HepG2 (cell line): ENCODE measurements at regions of chr7 and their contacts with region 1.

Region 1: DNA sequence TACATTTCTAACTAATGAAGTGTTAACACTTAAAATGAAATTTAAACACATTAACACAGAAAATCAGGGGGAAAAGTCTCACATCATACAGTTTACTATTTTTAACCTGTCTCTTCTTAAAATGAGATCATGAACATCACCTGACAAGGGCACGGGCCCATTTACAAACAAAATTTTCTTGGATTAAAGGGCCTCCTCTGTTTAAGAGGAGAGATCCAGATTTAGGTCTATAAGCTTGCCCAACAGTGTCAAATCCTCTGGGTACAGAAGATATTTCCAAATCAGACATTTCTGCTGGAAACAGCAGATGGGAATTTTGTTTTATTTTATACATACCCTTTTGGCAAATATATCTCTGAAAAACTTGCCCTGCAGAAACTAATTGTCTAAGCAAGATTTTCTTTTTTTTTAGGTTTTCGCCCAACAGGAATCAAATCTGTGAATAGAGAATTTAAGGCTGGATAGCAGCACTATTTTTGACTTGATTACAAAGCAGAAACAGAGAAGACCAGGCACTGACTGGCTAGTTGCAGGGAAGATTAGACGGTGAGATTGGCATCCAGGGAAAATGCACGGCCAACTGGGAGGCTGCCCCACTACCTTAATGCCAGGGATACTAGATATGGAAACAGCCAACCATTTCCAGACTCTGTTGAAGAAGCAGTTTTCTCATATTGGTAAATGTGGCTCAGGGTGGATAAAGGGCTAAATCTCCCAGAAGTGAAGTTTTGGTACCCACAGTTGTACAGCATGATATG is 173.4 kb downstream of the LRRN3 start:
- DNase-seq: no peak
- ATAC-seq: no peak
- H3K4me3 ChIP-seq: no peak overlapping the region
- H3K27ac ChIP-seq: no peak overlapping the region
- H3K4me1 ChIP-seq: peaks cover 28% of the 10 kb centered on the region
- H3K27me3 ChIP-seq: no peaks in the 10 kb centered on the region
- CTCF ChIP-seq: no peak
- EP300 ChIP-seq: no peak
- POLR2A ChIP-seq: no peak
- RAD21 ChIP-seq: no peak

Region 2: DNA sequence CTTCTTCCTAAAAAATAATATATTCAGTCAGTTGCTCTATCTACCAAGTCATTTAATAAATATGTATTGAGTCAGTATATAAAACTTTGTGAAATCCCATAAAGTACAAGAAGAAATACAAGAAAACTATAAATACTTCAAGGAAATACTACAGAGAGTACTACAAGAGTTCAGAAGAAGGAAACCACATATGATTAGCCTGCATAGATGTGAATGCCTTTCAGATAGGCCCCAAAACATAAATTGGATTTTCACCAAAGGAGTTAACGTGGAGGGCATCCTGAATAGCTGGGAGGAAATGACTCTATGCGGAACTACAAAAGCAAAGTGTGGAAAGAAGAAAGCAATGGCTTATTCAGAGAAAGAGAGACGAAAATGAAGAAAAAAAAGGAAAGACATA is 53.3 kb before region 1 on chr7:
- CTCF ChIA-PET with region 1: no interaction called
- POLR2A ChIA-PET with region 1: no interaction called
- in situ Hi-C with region 1: no loop called
- intact Hi-C with region 1: no loop called
- DNase-seq: no peak
- ATAC-seq: no peak
- H3K4me3 ChIP-seq: no peak overlapping the region
- H3K27ac ChIP-seq: no peak overlapping the region
- H3K4me1 ChIP-seq: no peaks in the 10 kb centered on the region
- H3K27me3 ChIP-seq: no peaks in the 10 kb centered on the region; a peak in 1 of 5 replicates
- CTCF ChIP-seq: no peak
- EP300 ChIP-seq: no peak
- POLR2A ChIP-seq: no peak
- RAD21 ChIP-seq: no peak

Region 3: DNA sequence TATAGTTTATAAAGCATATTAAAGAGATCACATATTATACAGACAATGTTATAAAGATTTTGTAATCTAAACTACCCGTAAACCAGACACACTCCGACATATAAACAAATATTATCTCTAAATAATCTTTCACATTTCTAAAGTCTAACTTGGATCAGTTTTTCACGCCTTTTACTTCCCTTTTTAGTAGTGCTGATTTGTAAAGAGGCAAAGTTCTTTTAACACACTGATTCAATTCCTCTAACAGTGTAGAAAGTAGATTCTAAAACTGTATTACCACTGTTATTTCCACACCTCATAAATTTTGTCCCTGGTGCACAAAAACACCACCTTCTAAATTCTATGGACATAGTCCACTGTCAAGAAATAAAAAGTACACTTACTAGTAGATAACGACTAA is 711.1 kb after region 1 on chr7:
- CTCF ChIA-PET with region 1: no interaction called
- POLR2A ChIA-PET with region 1: no interaction called
- in situ Hi-C with region 1: no loop called
- intact Hi-C with region 1: no loop called
- DNase-seq: no peak
- ATAC-seq: no peak
- H3K4me3 ChIP-seq: no peak overlapping the region
- H3K27ac ChIP-seq: no peak overlapping the region
- H3K4me1 ChIP-seq: no peaks in the 10 kb centered on the region
- H3K27me3 ChIP-seq: no peaks in the 10 kb centered on the region
- CTCF ChIP-seq: no peak
- EP300 ChIP-seq: no peak
- POLR2A ChIP-seq: no peak
- RAD21 ChIP-seq: no peak

Region 4: GRCh38 chr7:112120696-112121217 is 856.5 kb after region 1 on chr7:
- CTCF ChIA-PET with region 1: no interaction called
- POLR2A ChIA-PET with region 1: no interaction called
- in situ Hi-C with region 1: no loop called
- intact Hi-C with region 1: loop called (anchors 5 kb)
- DNase-seq: no peak
- ATAC-seq: no peak
- H3K4me3 ChIP-seq: no peak overlapping the region
- H3K27ac ChIP-seq: no peak overlapping the region
- H3K4me1 ChIP-seq: peaks cover 13% of the 10 kb centered on the region
- H3K27me3 ChIP-seq: no peaks in the 10 kb centered on the region
- CTCF ChIP-seq: no peak
- EP300 ChIP-seq: no peak
- POLR2A ChIP-seq: no peak
- RAD21 ChIP-seq: no peak